Uterus (tissue), 4 donors: ENCODE measurements at regions of chr7 and their contacts with region 1.

Region 1: GRCh38 chr7:99551767-99552463 is at the start of gene FAM200A:
- DNase-seq: peak; percentile 88 to 89
- H3K4me3 ChIP-seq: peak within 1 kb of the TSS; percentile 86 to 92
- H3K27ac ChIP-seq: peak within 1 kb of the TSS; percentile 82 to 87
- H3K4me1 ChIP-seq: peaks cover 0 to 8% of the 10 kb centered on the region in 2 donors
- H3K27me3 ChIP-seq: no peaks in the 10 kb centered on the region
- CTCF ChIP-seq: no peak
- POLR2A ChIP-seq: peak in 1 of 2 donors; percentile 79
- total RNA-seq, gene FAM200A: 1.3 to 22.6 (median 5.1) TPM

Region 2: GRCh38 chr7:99504603-99505323 is 47.2 kb before region 1 on chr7 and contains the start of gene ZKSCAN5:
- intact Hi-C with region 1: loop called (anchors 5 kb)
- DNase-seq: peak; percentile 97 to 98
- H3K4me3 ChIP-seq: peak within 1 kb of the TSS; percentile 53 to 98
- H3K27ac ChIP-seq: peak within 1 kb of the TSS; percentile 93 to 96
- H3K4me1 ChIP-seq: peaks cover 6 to 17% of the 10 kb centered on the region in 2 donors
- H3K27me3 ChIP-seq: no peaks in the 10 kb centered on the region
- CTCF ChIP-seq: no peak
- POLR2A ChIP-seq: no peak
- total RNA-seq, gene ZKSCAN5: 3.1 to 15.5 (median 9.2) TPM

Region 3: GRCh38 chr7:99597762-99598501 is 46.0 kb after region 1 on chr7 and contains the start of gene TMEM225B:
- intact Hi-C with region 1: no loop called
- DNase-seq: no peak
- H3K4me3 ChIP-seq: no peak within 1 kb of the TSS
- H3K27ac ChIP-seq: no peak within 1 kb of the TSS
- H3K4me1 ChIP-seq: no peaks in the 10 kb centered on the region
- H3K27me3 ChIP-seq: no peaks in the 10 kb centered on the region
- CTCF ChIP-seq: no peak
- POLR2A ChIP-seq: no peak
- total RNA-seq, gene TMEM225B: 0.29 to 2.2 (median 0.66) TPM